GM12878 (cell line): ENCODE measurements at regions of chr3 and their contacts with region 1.

Region 1: GRCh38 chr3:19931767-19932188 is 2.2 kb downstream of the EFHB start:
- DNase-seq: no peak
- ATAC-seq: peak; percentile 77
- H3K4me3 ChIP-seq: 0 out of 2 replicates have a peak overlapping the region, but pooled peaks have one; percentile 25
- H3K27ac ChIP-seq: peak overlapping the region; percentile 1; the same call in 1 of the 2 replicates
- H3K4me1 ChIP-seq: peaks cover 13% of the 10 kb centered on the region
- H3K27me3 ChIP-seq: no peaks in the 10 kb centered on the region
- CTCF ChIP-seq: no peak
- EP300 ChIP-seq: no peak
- POLR2A ChIP-seq: no peak
- RAD21 ChIP-seq: no peak

Region 2: GRCh38 chr3:19946832-19947548 is 15.2 kb after region 1 on chr3 and contains the start of gene RAB5A:
- CTCF ChIA-PET with region 1: no interaction called
- POLR2A ChIA-PET with region 1: interaction called, 4 read pairs
- RAD21 ChIA-PET with region 1: interaction called, 4 read pairs
- SMC1A ChIA-PET with region 1: interaction called, 5 read pairs
- in situ Hi-C with region 1: no loop called
- intact Hi-C with region 1: loop called (anchors 2 kb)
- DNase-seq: peak; percentile 94
- ATAC-seq: peak; percentile 92
- H3K4me3 ChIP-seq: peak within 1 kb of the TSS; percentile 89
- H3K27ac ChIP-seq: peak within 1 kb of the TSS; percentile 91
- H3K4me1 ChIP-seq: peaks cover 3% of the 10 kb centered on the region; the same call in 1 of the 2 replicates
- H3K27me3 ChIP-seq: no peaks in the 10 kb centered on the region
- CTCF ChIP-seq: no peak
- EP300 ChIP-seq: peak in 1 of 2 experiments; percentile 31; a peak in 1 of 4 replicates
- POLR2A ChIP-seq: peak; percentile 90
- RAD21 ChIP-seq: no peak
- polyA plus RNA-seq, gene RAB5A: 15.8 to 16.2 TPM

Region 3: DNA sequence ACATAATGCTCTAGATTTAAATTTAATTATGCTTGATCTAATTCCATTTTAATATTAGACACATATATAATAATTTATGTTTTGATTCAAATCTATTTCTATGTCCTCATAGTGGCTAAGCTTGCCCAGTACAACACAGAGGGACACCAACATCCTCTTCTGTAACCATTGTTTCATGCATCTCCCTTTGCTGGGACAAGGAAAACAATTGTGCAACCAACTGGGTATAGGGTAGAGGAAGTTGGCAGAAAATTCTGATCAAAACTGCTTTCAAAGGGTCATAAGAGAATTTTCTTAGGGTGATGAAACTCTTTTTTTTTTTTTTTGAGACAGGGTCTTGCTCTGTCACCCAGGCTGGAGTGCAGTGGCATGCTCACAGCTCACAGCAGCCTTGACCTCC is 375.6 kb after region 1 on chr3:
- CTCF ChIA-PET with region 1: no interaction called
- POLR2A ChIA-PET with region 1: no interaction called
- RAD21 ChIA-PET with region 1: no interaction called
- SMC1A ChIA-PET with region 1: no interaction called
- in situ Hi-C with region 1: no loop called
- intact Hi-C with region 1: no loop called
- DNase-seq: no peak
- ATAC-seq: no peak
- H3K4me3 ChIP-seq: no peak overlapping the region
- H3K27ac ChIP-seq: no peak overlapping the region
- H3K4me1 ChIP-seq: no peaks in the 10 kb centered on the region
- H3K27me3 ChIP-seq: no peaks in the 10 kb centered on the region
- CTCF ChIP-seq: no peak
- EP300 ChIP-seq: no peak
- POLR2A ChIP-seq: no peak
- RAD21 ChIP-seq: no peak

Region 4: GRCh38 chr3:21421096-21421495 is 1489.3 kb after region 1 on chr3:
- CTCF ChIA-PET with region 1: no interaction called
- POLR2A ChIA-PET with region 1: no interaction called
- RAD21 ChIA-PET with region 1: no interaction called
- SMC1A ChIA-PET with region 1: no interaction called
- in situ Hi-C with region 1: no loop called
- intact Hi-C with region 1: no loop called
- DNase-seq: no peak
- ATAC-seq: no peak
- H3K4me3 ChIP-seq: no peak overlapping the region
- H3K27ac ChIP-seq: no peak overlapping the region
- H3K4me1 ChIP-seq: no peaks in the 10 kb centered on the region
- H3K27me3 ChIP-seq: no peaks in the 10 kb centered on the region
- CTCF ChIP-seq: no peak
- EP300 ChIP-seq: no peak
- POLR2A ChIP-seq: no peak
- RAD21 ChIP-seq: no peak